IMR-90 (cell line): ENCODE measurements at regions of chr9 and their contacts with region 1.

Region 1: GRCh38 chr9:129131300-129132145 is 20.3 kb downstream of the PTPA start:
- DNase-seq: peak; percentile 55
- ATAC-seq: peak; percentile 98
- H3K4me3 ChIP-seq: no peak overlapping the region
- H3K27ac ChIP-seq: no peak overlapping the region
- H3K4me1 ChIP-seq: no peaks in the 10 kb centered on the region
- H3K27me3 ChIP-seq: no peaks in the 10 kb centered on the region
- CTCF ChIP-seq: peak; percentile 98
- POLR2A ChIP-seq: 0 out of 2 replicates have a peak, but pooled peaks have one; percentile 38
- RAD21 ChIP-seq: peak; percentile 98

Region 2: GRCh38 chr9:129121483-129121882 is 10.0 kb before region 1 on chr9:
- CTCF ChIA-PET with region 1: interaction called, 10 read pairs
- POLR2A ChIA-PET with region 1: no interaction called
- dilution Hi-C with region 1: no loop called
- in situ Hi-C with region 1: no loop called
- intact Hi-C with region 1: no loop called
- DNase-seq: peak; percentile 35
- ATAC-seq: peak; percentile 36
- H3K4me3 ChIP-seq: no peak overlapping the region
- H3K27ac ChIP-seq: no peak overlapping the region
- H3K4me1 ChIP-seq: peaks cover 5% of the 10 kb centered on the region
- H3K27me3 ChIP-seq: no peaks in the 10 kb centered on the region
- CTCF ChIP-seq: no peak
- POLR2A ChIP-seq: no peak
- RAD21 ChIP-seq: no peak

Region 3: GRCh38 chr9:129617167-129617566 is 485.6 kb after region 1 on chr9:
- CTCF ChIA-PET with region 1: interaction called, 3 read pairs
- POLR2A ChIA-PET with region 1: no interaction called
- dilution Hi-C with region 1: no loop called
- in situ Hi-C with region 1: loop called (anchors 5 kb)
- intact Hi-C with region 1: no loop called
- DNase-seq: peak; percentile 86
- ATAC-seq: peak; percentile 67
- H3K4me3 ChIP-seq: no peak overlapping the region
- H3K27ac ChIP-seq: no peak overlapping the region; the same call in 1 of the 2 replicates
- H3K4me1 ChIP-seq: peaks cover 11% of the 10 kb centered on the region
- H3K27me3 ChIP-seq: no peaks in the 10 kb centered on the region
- CTCF ChIP-seq: peak; percentile 73
- POLR2A ChIP-seq: no peak
- RAD21 ChIP-seq: peak; percentile 68

Region 4: GRCh38 chr9:129626079-129626624 is 494.6 kb after region 1 on chr9 and contains the start of gene NTMT1:
- CTCF ChIA-PET with region 1: interaction called, 26 read pairs
- POLR2A ChIA-PET with region 1: interaction called, 9 read pairs
- dilution Hi-C with region 1: no loop called
- in situ Hi-C with region 1: no loop called
- intact Hi-C with region 1: no loop called
- DNase-seq: peak; percentile 81
- ATAC-seq: peak; percentile 72
- H3K4me3 ChIP-seq: peak within 1 kb of the TSS; percentile 96
- H3K27ac ChIP-seq: peak within 1 kb of the TSS; percentile 94
- H3K4me1 ChIP-seq: peaks cover 27% of the 10 kb centered on the region
- H3K27me3 ChIP-seq: no peaks in the 10 kb centered on the region
- CTCF ChIP-seq: no peak
- POLR2A ChIP-seq: peak; percentile 86
- RAD21 ChIP-seq: no peak
- total RNA-seq, gene NTMT1: 67.8 and 68.1 TPM in 2 replicates

Region 5: DNA sequence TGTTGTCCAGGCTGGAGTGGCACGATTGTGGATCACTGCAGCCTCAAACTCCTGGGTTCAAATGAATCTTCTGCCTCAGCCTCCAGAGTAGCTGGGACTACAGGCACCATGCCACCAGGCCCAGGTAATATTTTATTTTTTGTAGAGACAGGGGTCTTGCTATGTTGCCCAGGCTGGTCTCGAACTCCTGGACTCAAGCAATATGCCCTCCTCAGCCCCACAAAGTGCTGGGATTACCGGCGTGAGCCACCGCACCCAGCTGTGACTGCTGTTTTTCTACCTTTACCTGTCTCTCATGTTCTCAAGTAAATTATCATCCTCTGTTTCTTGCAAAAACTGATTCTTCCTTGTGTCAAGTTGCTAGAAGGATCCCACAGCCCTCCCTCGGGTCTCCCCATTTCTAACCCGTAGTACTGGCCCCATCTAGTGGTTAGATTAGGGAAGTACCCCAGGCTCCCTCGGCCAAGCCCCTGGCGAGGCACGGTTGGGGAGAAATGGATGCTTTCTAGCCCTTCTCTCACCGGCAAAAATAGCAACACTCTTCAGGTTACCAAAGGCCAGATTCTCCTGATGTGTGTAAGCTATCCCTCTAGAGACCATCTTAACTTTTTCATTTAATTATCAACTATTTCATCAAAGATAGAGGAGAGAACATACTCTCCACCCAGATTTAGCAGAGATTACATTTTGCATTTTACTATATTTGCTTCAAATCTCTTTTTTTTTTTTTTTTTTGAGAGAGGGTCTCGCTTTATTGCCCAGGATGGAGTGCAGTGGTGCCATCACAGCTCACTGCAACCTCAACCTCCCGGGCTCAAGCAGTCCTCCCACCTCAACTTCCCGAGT is 652.2 kb after region 1 on chr9:
- CTCF ChIA-PET with region 1: no interaction called
- POLR2A ChIA-PET with region 1: no interaction called
- dilution Hi-C with region 1: no loop called
- in situ Hi-C with region 1: loop called (anchors 5 kb)
- intact Hi-C with region 1: loop called (anchors 5 kb)
- DNase-seq: peak; percentile 75
- ATAC-seq: peak; percentile 96
- H3K4me3 ChIP-seq: no peak overlapping the region
- H3K27ac ChIP-seq: no peak overlapping the region
- H3K4me1 ChIP-seq: peaks cover 3% of the 10 kb centered on the region; the same call in 1 of the 2 replicates
- H3K27me3 ChIP-seq: peaks cover 10% of the 10 kb centered on the region
- CTCF ChIP-seq: peak; percentile 96
- POLR2A ChIP-seq: peak; percentile 66
- RAD21 ChIP-seq: peak; percentile 100